Calu3 (cell line): ENCODE measurements at regions of chr3 and their contacts with region 1.

Region 1: GRCh38 chr3:35965908-35966307 is 326.6 kb downstream of the ARPP21 start:
- DNase-seq: peak; percentile 7
- H3K4me3 Mint-ChIP-seq: no peak overlapping the region
- H3K27ac Mint-ChIP-seq: no peak overlapping the region
- H3K4me1 Mint-ChIP-seq: no peaks in the 10 kb centered on the region
- H3K27me3 Mint-ChIP-seq: no peaks in the 10 kb centered on the region
- CTCF ChIP-seq: no peak

Region 2: DNA sequence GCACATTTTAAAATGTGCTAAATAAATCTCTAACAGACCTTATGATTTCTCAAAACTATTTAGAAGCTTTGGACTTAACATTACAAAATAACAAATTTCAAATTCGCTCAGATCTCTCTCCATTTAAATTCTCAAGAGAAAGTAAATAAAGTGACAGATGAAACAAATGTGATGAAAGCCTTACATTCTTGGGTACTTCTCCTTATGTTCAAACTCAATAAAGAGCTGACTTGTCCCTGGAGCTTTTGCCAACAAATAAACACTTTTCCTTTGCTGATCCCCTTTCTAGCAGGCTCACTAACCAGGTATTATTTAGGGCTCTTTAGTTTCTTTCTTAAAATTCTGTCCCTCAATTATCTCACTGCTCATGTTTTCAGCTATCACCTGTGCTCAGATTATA is 585.7 kb before region 1 on chr3:
- CTCF ChIA-PET with region 1: no interaction called
- intact Hi-C with region 1: no loop called
- DNase-seq: no peak
- H3K4me3 Mint-ChIP-seq: no peak overlapping the region
- H3K27ac Mint-ChIP-seq: no peak overlapping the region
- H3K4me1 Mint-ChIP-seq: no peaks in the 10 kb centered on the region
- H3K27me3 Mint-ChIP-seq: no peaks in the 10 kb centered on the region
- CTCF ChIP-seq: no peak

Region 3: GRCh38 chr3:35832140-35832571 is 133.8 kb before region 1 on chr3:
- CTCF ChIA-PET with region 1: no interaction called
- intact Hi-C with region 1: no loop called
- DNase-seq: peak; percentile 11
- H3K4me3 Mint-ChIP-seq: peak overlapping the region; percentile 18
- H3K27ac Mint-ChIP-seq: peak overlapping the region; percentile 76
- H3K4me1 Mint-ChIP-seq: peaks cover 42% of the 10 kb centered on the region
- H3K27me3 Mint-ChIP-seq: peaks cover 13% of the 10 kb centered on the region
- CTCF ChIP-seq: no peak

Region 4: GRCh38 chr3:36124118-36124796 is 158.3 kb after region 1 on chr3:
- CTCF ChIA-PET with region 1: no interaction called
- intact Hi-C with region 1: loop called (anchors 5 kb)
- DNase-seq: peak; percentile 64
- H3K4me3 Mint-ChIP-seq: no peak overlapping the region
- H3K27ac Mint-ChIP-seq: no peak overlapping the region
- H3K4me1 Mint-ChIP-seq: peaks cover 6% of the 10 kb centered on the region
- H3K27me3 Mint-ChIP-seq: no peaks in the 10 kb centered on the region
- CTCF ChIP-seq: peak; percentile 53

Region 5: DNA sequence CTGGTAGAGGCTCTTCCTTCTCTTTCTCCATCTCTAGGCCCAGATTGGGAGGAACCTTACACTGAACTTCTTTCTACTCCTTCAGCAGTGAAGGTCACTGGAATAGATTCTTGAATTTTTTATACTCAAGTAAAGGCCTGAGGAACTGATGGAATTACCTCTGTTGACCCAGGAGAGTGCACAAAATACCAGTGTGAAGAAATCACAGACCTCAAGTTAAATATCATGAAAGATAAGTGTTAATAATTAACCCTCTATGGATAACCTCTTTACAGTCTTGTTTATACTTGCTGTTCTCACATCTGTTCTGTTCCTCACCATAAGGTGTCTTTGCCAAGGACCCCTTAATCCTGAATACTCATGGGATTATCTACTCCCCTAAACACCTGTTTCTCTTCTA is 170.0 kb after region 1 on chr3:
- CTCF ChIA-PET with region 1: no interaction called
- intact Hi-C with region 1: no loop called
- DNase-seq: no peak
- H3K4me3 Mint-ChIP-seq: no peak overlapping the region
- H3K27ac Mint-ChIP-seq: peak overlapping the region; percentile 5
- H3K4me1 Mint-ChIP-seq: peaks cover 23% of the 10 kb centered on the region
- H3K27me3 Mint-ChIP-seq: no peaks in the 10 kb centered on the region
- CTCF ChIP-seq: no peak